Activated T-helper 1 cell treated with anti-CD3 and anti-CD28 coated beads, Interleukin-12 subunit alpha, Interleukin-12 subunit beta, Interleukin-2, Interleukin-4 antibody, amounts not matched to agents 30 ng/mL and 10 ng/mL and 1 ng/mL, durations not matched to agents 14 hours and 24 hours and 36 hours (primary cell): ENCODE measurements at regions of chr2 and their contacts with region 1.

Region 1: GRCh38 chr2:68467077-68467960 is at the starts of genes APLF and FBXO48:
- DNase-seq: peak; percentile 97
- H3K4me3 Mint-ChIP-seq: peak within 1 kb of the TSS; percentile 97
- H3K27ac Mint-ChIP-seq: peak within 1 kb of the TSS; percentile 91
- H3K4me1 Mint-ChIP-seq: peaks cover 48% of the 10 kb centered on the region
- H3K27me3 Mint-ChIP-seq: no peaks in the 10 kb centered on the region
- total RNA-seq, gene APLF: 2.3 and 3.0 TPM in 2 replicates
- total RNA-seq, gene FBXO48: 1.3 and 1.4 TPM in 2 replicates

Region 2: DNA sequence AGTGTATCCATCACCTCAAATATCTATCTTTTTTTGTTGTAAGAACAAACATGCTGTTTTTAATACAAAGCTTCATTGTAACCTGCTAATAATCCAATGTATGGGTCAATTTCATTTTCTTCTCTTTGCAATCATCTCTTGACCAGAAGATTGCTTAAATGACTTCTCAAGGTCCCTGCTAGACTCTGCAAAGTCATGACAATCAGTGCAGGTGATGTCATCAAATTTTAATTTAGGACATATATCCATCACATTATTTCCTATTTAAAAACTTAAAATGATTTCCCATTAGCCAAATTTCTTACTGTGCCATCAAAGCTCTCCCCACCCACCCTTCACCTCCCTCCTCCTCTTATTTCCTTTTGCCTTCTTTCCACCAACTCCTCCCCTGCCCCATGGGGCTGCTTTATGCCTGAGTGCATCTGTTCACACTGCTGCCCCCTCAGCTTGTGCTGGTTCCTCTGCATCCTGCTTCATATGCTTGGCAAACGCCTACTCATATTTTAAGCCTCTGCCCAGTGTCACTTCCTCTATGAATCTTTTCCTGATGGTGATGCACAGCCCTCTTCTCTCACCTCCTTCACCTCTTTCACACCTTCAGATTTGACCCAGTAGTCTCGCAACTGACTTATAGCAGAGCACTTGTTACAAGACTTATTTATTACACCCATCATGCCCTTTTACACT is 82.0 kb before region 1 on chr2:
- intact Hi-C with region 1: loop called (anchors 1 kb)
- DNase-seq: no peak
- H3K4me3 Mint-ChIP-seq: peak overlapping the region; percentile 42
- H3K27ac Mint-ChIP-seq: peak overlapping the region; percentile 91
- H3K4me1 Mint-ChIP-seq: peaks cover 49% of the 10 kb centered on the region
- H3K27me3 Mint-ChIP-seq: peaks cover 2% of the 10 kb centered on the region

Region 3: GRCh38 chr2:68594674-68595492 is 127.6 kb after region 1 on chr2:
- intact Hi-C with region 1: loop called (anchors 1 kb)
- DNase-seq: peak; percentile 35
- H3K4me3 Mint-ChIP-seq: no peak overlapping the region
- H3K27ac Mint-ChIP-seq: no peak overlapping the region
- H3K4me1 Mint-ChIP-seq: peaks cover 8% of the 10 kb centered on the region
- H3K27me3 Mint-ChIP-seq: peaks cover 6% of the 10 kb centered on the region

Region 4: GRCh38 chr2:68734688-68735525 is 267.6 kb after region 1 on chr2 and contains the start of gene ARHGAP25:
- intact Hi-C with region 1: loop called (anchors 2 kb)
- DNase-seq: peak; percentile 61
- H3K4me3 Mint-ChIP-seq: no peak within 1 kb of the TSS
- H3K27ac Mint-ChIP-seq: no peak within 1 kb of the TSS
- H3K4me1 Mint-ChIP-seq: peaks cover 42% of the 10 kb centered on the region
- H3K27me3 Mint-ChIP-seq: no peaks in the 10 kb centered on the region
- total RNA-seq, gene ARHGAP25: 71.6 and 74.2 TPM in 2 replicates

Region 5: GRCh38 chr2:68909793-68910674 is 442.7 kb after region 1 on chr2:
- intact Hi-C with region 1: loop called (anchors 1 kb)
- DNase-seq: peak; percentile 56
- H3K4me3 Mint-ChIP-seq: peak overlapping the region; percentile 12
- H3K27ac Mint-ChIP-seq: peak overlapping the region; percentile 70
- H3K4me1 Mint-ChIP-seq: peaks cover 33% of the 10 kb centered on the region
- H3K27me3 Mint-ChIP-seq: no peaks in the 10 kb centered on the region

Region 6: GRCh38 chr2:69386789-69387734 is 919.7 kb after region 1 on chr2 and contains the start of gene GFPT1:
- intact Hi-C with region 1: loop called (anchors 2 kb)
- DNase-seq: peak; percentile 93
- H3K4me3 Mint-ChIP-seq: peak within 1 kb of the TSS; percentile 87
- H3K27ac Mint-ChIP-seq: peak within 1 kb of the TSS; percentile 81
- H3K4me1 Mint-ChIP-seq: peaks cover 46% of the 10 kb centered on the region
- H3K27me3 Mint-ChIP-seq: no peaks in the 10 kb centered on the region
- total RNA-seq, gene GFPT1: 47.3 and 52.3 TPM in 2 replicates